GM12878 (cell line): ENCODE measurements at regions of chr10 and their contacts with region 1.

Region 1: GRCh38 chr10:61987951-61988379 is 86.5 kb downstream of the ARID5B start:
- DNase-seq: peak; percentile 97
- ATAC-seq: peak; percentile 94
- H3K4me3 ChIP-seq: peak overlapping the region; percentile 36
- H3K27ac ChIP-seq: peak overlapping the region; percentile 98
- H3K4me1 ChIP-seq: peaks cover 45% of the 10 kb centered on the region
- H3K27me3 ChIP-seq: no peaks in the 10 kb centered on the region
- CTCF ChIP-seq: no peak
- EP300 ChIP-seq: peak; percentile 96 to 98
- POLR2A ChIP-seq: peak; percentile 48
- RAD21 ChIP-seq: no peak

Region 2: GRCh38 chr10:61896854-61897661 is 90.9 kb before region 1 on chr10:
- CTCF ChIA-PET with region 1: interaction called, 6 read pairs
- POLR2A ChIA-PET with region 1: interaction called, 3 read pairs
- RAD21 ChIA-PET with region 1: interaction called, 10 read pairs
- SMC1A ChIA-PET with region 1: interaction called, 5 read pairs
- in situ Hi-C with region 1: no loop called
- intact Hi-C with region 1: loop called (anchors 2 kb)
- DNase-seq: peak; percentile 85
- ATAC-seq: peak; percentile 79
- H3K4me3 ChIP-seq: no peak overlapping the region; the same call in 1 of the 2 replicates
- H3K27ac ChIP-seq: peak overlapping the region; percentile 57
- H3K4me1 ChIP-seq: peaks cover 28% of the 10 kb centered on the region
- H3K27me3 ChIP-seq: no peaks in the 10 kb centered on the region
- CTCF ChIP-seq: peak; percentile 76 to 86 (median 85)
- EP300 ChIP-seq: no peak
- POLR2A ChIP-seq: no peak
- RAD21 ChIP-seq: peak; percentile 79

Region 3: GRCh38 chr10:61903221-61903927 is 84.6 kb before region 1 on chr10:
- CTCF ChIA-PET with region 1: interaction called, 5 read pairs
- POLR2A ChIA-PET with region 1: interaction called, 4 read pairs
- RAD21 ChIA-PET with region 1: interaction called, 10 read pairs
- SMC1A ChIA-PET with region 1: interaction called, 5 read pairs
- in situ Hi-C with region 1: no loop called
- intact Hi-C with region 1: loop called (anchors 2 kb)
- DNase-seq: peak; percentile 53
- ATAC-seq: peak; percentile 65
- H3K4me3 ChIP-seq: peak overlapping the region; percentile 85
- H3K27ac ChIP-seq: peak overlapping the region; percentile 96
- H3K4me1 ChIP-seq: peaks cover 20% of the 10 kb centered on the region
- H3K27me3 ChIP-seq: no peaks in the 10 kb centered on the region
- CTCF ChIP-seq: peak; percentile 0 to 17 (median 12); a peak in 3 of 6 replicates
- EP300 ChIP-seq: peak; percentile 48 to 69; a peak in 2 of 4 replicates
- POLR2A ChIP-seq: peak; percentile 76
- RAD21 ChIP-seq: no peak

Region 4: DNA sequence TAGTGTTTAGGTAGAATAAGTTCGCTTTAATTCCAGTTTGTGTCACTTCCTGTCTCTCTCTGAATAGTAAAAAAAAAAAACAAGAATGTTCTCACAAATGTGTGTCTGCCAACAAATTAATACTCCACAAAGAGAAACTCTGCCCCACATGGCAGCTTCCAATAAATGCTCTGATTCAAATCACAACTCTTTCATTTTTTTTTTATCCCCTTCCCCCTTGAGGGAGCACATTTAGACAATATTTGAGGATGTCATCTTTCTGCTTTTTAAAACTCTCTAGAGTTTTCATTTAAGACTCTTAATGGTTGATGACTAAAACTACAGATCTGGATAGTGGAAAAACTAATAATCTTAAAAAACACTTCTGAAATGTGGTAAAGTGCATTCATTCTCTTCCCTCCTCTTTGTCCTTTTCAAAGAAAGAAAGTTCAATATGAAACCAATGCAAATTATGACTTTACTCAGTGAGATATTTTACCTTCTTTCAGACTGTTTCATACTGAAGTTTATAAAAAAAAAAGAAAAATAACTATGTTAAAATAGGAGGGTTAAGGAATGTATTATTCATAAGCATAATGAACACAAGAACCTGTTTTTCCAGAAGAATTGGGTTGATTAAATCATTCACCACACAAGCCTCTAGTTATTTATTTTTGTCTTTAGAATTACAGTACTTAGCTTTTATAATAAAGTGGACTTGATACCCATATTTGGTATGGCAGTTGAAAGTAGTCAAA is 44.1 kb before region 1 on chr10:
- CTCF ChIA-PET with region 1: interaction called, 4 read pairs
- POLR2A ChIA-PET with region 1: no interaction called
- RAD21 ChIA-PET with region 1: interaction called, 12 read pairs
- SMC1A ChIA-PET with region 1: interaction called, 25 read pairs
- in situ Hi-C with region 1: no loop called
- intact Hi-C with region 1: no loop called
- DNase-seq: no peak
- ATAC-seq: peak; percentile 73
- H3K4me3 ChIP-seq: 0 out of 2 replicates have a peak overlapping the region, but pooled peaks have one; percentile 53
- H3K27ac ChIP-seq: peak overlapping the region; percentile 97
- H3K4me1 ChIP-seq: peaks cover 52% of the 10 kb centered on the region
- H3K27me3 ChIP-seq: no peaks in the 10 kb centered on the region
- CTCF ChIP-seq: peak in 1 of 3 experiments; percentile 11; a peak in 1 of 6 replicates
- EP300 ChIP-seq: peak in 1 of 2 experiments; percentile 63; a peak in 1 of 4 replicates
- POLR2A ChIP-seq: no peak
- RAD21 ChIP-seq: peak; percentile 42; the same call in 1 of the 2 replicates

Region 5: DNA sequence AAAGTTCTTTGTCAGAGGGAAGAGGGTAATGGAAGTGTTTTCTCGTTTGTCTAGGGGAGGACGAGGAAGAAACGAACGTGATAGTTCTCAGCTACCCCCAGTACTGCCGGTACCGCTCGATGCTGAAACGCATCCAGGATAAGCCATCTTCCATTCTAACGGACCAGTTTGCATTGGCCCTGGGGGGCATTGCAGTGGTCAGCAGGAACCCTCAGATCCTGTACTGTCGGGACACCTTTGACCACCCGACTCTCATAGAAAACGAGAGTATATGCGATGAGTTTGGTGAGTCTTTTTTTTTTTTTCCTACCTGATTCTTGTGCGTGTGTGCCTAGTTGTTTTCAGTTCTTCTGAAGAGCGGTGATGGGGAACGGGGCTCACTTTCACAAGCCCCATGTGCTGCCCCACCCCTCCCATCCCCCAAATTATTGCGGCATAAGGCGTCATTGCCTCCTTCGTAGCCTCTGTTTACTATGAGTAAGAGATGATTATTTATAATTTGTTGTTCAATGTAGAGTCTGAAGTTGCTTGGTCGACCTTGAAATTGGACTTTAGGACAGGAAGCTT is 12.2 kb after region 1 on chr10:
- CTCF ChIA-PET with region 1: interaction called, 4 read pairs
- POLR2A ChIA-PET with region 1: interaction called, 4 read pairs
- RAD21 ChIA-PET with region 1: interaction called, 7 read pairs
- SMC1A ChIA-PET with region 1: interaction called, 13 read pairs
- in situ Hi-C with region 1: no loop called
- intact Hi-C with region 1: no loop called
- DNase-seq: peak; percentile 90
- ATAC-seq: peak; percentile 86
- H3K4me3 ChIP-seq: peak overlapping the region; percentile 49
- H3K27ac ChIP-seq: peak overlapping the region; percentile 96
- H3K4me1 ChIP-seq: peaks cover 45% of the 10 kb centered on the region
- H3K27me3 ChIP-seq: no peaks in the 10 kb centered on the region
- CTCF ChIP-seq: no peak
- EP300 ChIP-seq: peak; percentile 100
- POLR2A ChIP-seq: peak; percentile 69
- RAD21 ChIP-seq: peak; percentile 15; the same call in 1 of the 2 replicates